CD8-positive, alpha-beta T cell (primary cell): ENCODE measurements at regions of chr1 and their contacts with region 1.

Region 1: DNA sequence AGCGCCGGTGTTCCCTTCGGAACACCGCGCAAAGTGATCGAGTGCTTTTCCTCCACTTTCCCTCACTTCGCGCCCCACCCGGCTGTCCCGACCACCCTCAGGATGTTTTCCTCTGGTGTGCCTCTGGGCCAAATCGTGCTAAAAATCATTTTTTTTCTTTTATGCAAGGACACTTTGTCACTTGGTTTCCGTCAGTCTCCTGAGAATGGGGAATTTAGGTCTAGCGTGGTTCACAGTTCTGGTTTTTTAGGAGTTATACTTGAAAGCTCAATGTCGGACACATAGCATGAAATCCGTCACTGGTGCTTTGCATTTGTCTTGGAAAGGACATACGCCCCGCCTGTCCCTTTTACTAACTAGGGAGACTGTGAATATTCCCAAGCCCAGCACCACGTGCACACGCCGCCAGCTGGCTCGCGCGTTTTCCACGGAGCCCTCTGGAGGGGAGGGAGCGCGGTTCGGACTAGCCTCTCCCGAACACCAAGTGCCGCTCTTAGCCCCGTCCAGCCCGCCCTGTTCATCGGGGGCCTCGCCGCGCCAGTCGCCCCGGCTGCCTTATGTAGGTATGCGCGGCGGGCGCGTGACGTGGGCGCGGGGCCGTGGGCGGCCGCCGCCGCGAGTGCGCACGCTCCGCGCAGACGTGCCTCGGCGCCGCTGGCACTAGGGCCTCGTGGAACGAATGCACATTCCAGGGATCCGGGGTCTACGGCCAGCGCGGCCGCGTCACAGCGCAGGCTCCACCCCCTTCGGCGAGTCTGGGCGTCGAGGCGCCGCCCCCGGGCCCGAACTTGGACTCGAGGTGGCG is 572 bp upstream of the IRF2BP2 start:
- DNase-seq: peak; percentile 78 to 98 (median 89)
- ATAC-seq: peak; percentile 42
- H3K4me3 ChIP-seq: peak overlapping the region; percentile 78 to 86
- H3K4me3 Mint-ChIP-seq: peak overlapping the region; percentile 92
- H3K27ac ChIP-seq: peak overlapping the region; percentile 97 to 99
- H3K27ac Mint-ChIP-seq: peak overlapping the region; percentile 98
- H3K4me1 ChIP-seq: peaks cover 46% of the 10 kb centered on the region
- H3K4me1 Mint-ChIP-seq: peaks cover 49% of the 10 kb centered on the region
- H3K27me3 ChIP-seq: no peaks in the 10 kb centered on the region
- H3K27me3 Mint-ChIP-seq: no peaks in the 10 kb centered on the region
- CTCF ChIP-seq: no peak

Region 2: DNA sequence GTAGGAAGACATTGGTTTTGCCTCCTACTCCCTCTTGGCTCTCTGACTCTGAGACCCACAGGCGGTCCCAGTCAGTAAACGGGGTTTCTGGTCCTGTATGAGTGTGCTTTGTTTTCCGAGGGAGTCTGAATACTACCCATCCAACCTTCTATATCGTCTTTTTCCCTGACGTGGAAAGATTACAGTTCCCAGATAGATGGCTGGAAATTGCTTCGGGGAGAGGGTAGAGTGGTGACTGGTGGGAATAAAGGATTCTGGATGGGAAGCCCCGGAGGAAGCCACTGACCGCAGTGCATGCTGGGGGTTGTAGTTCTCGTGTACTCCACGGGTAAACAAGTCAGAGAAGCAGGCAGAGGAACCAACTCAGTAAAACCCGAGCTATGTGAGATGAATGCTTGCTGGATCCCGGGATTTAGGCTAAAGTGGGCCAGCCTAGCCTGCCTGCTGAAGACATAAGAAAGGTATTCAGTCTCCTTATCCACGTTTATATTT is 65.6 kb after region 1 on chr1:
- CTCF ChIA-PET with region 1: no interaction called
- POLR2A ChIA-PET with region 1: interaction called, 4 read pairs
- intact Hi-C with region 1: loop called (anchors 2 kb)
- DNase-seq: peak in 8 of 9 experiments; percentile 23 to 74 (median 58)
- ATAC-seq: peak; percentile 80
- H3K4me3 ChIP-seq: peak overlapping the region; percentile 35 to 60
- H3K4me3 Mint-ChIP-seq: peak overlapping the region; percentile 80
- H3K27ac ChIP-seq: no peak overlapping the region
- H3K27ac Mint-ChIP-seq: peak overlapping the region; percentile 60
- H3K4me1 ChIP-seq: peaks cover 8% of the 10 kb centered on the region
- H3K4me1 Mint-ChIP-seq: peaks cover 11% of the 10 kb centered on the region
- H3K27me3 ChIP-seq: no peaks in the 10 kb centered on the region
- H3K27me3 Mint-ChIP-seq: no peaks in the 10 kb centered on the region
- CTCF ChIP-seq: no peak

Region 3: DNA sequence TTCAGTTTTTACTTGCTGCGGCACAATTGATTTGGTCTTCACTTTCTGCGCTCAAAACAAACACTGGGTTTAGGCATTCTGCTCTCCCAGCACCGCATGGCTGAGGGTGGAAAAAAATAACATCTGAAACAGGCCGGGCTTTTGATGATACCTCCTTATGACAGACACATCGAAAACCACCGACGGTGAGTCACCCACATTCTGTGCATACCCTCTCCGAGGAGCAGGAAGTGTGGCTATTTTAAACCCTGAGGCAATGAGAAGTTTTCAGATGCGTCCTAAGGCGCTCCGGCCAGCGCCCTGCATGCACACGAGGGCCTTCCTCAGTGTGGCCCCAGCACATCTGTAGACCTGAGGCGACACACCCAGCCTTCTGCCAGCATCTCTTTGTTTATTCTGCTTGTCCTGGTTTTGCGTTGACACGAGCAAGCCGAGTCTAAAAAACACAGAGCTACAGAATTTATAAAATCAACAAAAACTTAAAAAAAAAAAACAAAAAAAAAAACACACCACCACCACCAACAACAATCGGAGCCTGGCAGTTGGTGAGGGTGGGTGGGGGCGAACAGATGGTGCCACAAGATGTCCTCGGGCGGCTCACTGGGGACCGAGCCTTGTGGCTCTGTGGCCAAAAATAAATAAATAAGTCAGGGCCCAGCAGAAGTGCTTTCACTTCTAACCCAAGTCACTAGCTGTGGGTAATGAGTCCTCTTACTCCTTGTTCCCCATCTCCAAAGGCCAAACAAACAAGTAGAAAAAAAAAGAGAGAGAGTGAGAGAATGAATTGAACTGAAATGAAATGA is 162.0 kb after region 1 on chr1:
- CTCF ChIA-PET with region 1: interaction called, 5 read pairs
- POLR2A ChIA-PET with region 1: interaction called, 10 read pairs
- intact Hi-C with region 1: loop called (anchors 1 to 5 kb)
- DNase-seq: peak; percentile 59 to 95 (median 85)
- ATAC-seq: peak; percentile 80
- H3K4me3 ChIP-seq: peak overlapping the region in 1 of 2 experiments; percentile 23
- H3K4me3 Mint-ChIP-seq: peak overlapping the region; percentile 66
- H3K27ac ChIP-seq: peak overlapping the region; percentile 39 to 73
- H3K27ac Mint-ChIP-seq: peak overlapping the region; percentile 94
- H3K4me1 ChIP-seq: peaks cover 58% of the 10 kb centered on the region
- H3K4me1 Mint-ChIP-seq: peaks cover 54% of the 10 kb centered on the region
- H3K27me3 ChIP-seq: no peaks in the 10 kb centered on the region
- H3K27me3 Mint-ChIP-seq: no peaks in the 10 kb centered on the region
- CTCF ChIP-seq: no peak

Region 4: DNA sequence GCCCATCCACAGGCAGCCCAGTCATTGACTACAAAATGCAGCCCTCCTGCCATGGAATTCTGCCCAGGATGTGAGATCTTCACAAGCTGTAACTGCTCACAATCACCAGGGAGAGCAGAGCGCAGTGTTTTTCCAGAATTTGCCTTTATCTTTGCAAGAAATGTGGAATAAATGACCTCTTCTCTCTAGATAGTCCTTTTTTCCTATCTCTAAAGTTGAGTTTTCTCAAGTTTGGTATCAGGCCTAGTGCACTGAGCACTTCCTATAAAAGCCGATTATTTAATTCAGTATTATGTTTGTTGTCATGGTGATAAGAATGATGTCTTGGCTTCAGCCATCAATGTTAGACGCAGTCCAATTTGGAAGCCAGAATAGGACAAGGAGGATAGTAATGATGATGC is 246.3 kb after region 1 on chr1:
- CTCF ChIA-PET with region 1: no interaction called
- POLR2A ChIA-PET with region 1: no interaction called
- intact Hi-C with region 1: no loop called
- DNase-seq: no peak
- ATAC-seq: no peak
- H3K4me3 ChIP-seq: no peak overlapping the region
- H3K4me3 Mint-ChIP-seq: no peak overlapping the region
- H3K27ac ChIP-seq: no peak overlapping the region
- H3K27ac Mint-ChIP-seq: no peak overlapping the region
- H3K4me1 ChIP-seq: no peaks in the 10 kb centered on the region
- H3K4me1 Mint-ChIP-seq: peaks cover 2% of the 10 kb centered on the region
- H3K27me3 ChIP-seq: no peaks in the 10 kb centered on the region
- H3K27me3 Mint-ChIP-seq: no peaks in the 10 kb centered on the region
- CTCF ChIP-seq: no peak

Region 5: GRCh38 chr1:234963180-234963903 is 352.8 kb after region 1 on chr1:
- CTCF ChIA-PET with region 1: no interaction called
- POLR2A ChIA-PET with region 1: interaction called, 11 read pairs
- intact Hi-C with region 1: loop called (anchors 1 to 5 kb)
- DNase-seq: peak; percentile 58 to 97 (median 86)
- ATAC-seq: peak; percentile 85
- H3K4me3 ChIP-seq: peak overlapping the region in 1 of 2 experiments; percentile 16
- H3K4me3 Mint-ChIP-seq: peak overlapping the region; percentile 64
- H3K27ac ChIP-seq: peak overlapping the region; percentile 31 to 81
- H3K27ac Mint-ChIP-seq: peak overlapping the region; percentile 90
- H3K4me1 ChIP-seq: peaks cover 58% of the 10 kb centered on the region
- H3K4me1 Mint-ChIP-seq: peaks cover 62% of the 10 kb centered on the region
- H3K27me3 ChIP-seq: no peaks in the 10 kb centered on the region
- H3K27me3 Mint-ChIP-seq: no peaks in the 10 kb centered on the region
- CTCF ChIP-seq: no peak

Region 6: GRCh38 chr1:235160957-235161684 is 550.6 kb after region 1 on chr1 and contains the start of gene RBM34:
- CTCF ChIA-PET with region 1: no interaction called
- POLR2A ChIA-PET with region 1: interaction called, 10 read pairs
- intact Hi-C with region 1: no loop called
- DNase-seq: peak; percentile 83 to 96 (median 93)
- ATAC-seq: peak; percentile 87
- H3K4me3 ChIP-seq: peak within 1 kb of the TSS; percentile 89 to 91
- H3K4me3 Mint-ChIP-seq: peak within 1 kb of the TSS; percentile 99
- H3K27ac ChIP-seq: peak within 1 kb of the TSS; percentile 91 to 93
- H3K27ac Mint-ChIP-seq: peak within 1 kb of the TSS; percentile 100
- H3K4me1 ChIP-seq: peaks cover 40% of the 10 kb centered on the region
- H3K4me1 Mint-ChIP-seq: peaks cover 18% of the 10 kb centered on the region
- H3K27me3 ChIP-seq: no peaks in the 10 kb centered on the region
- H3K27me3 Mint-ChIP-seq: no peaks in the 10 kb centered on the region
- CTCF ChIP-seq: no peak
- total RNA-seq, gene RBM34: 243 to 267 TPM

Region 7: DNA sequence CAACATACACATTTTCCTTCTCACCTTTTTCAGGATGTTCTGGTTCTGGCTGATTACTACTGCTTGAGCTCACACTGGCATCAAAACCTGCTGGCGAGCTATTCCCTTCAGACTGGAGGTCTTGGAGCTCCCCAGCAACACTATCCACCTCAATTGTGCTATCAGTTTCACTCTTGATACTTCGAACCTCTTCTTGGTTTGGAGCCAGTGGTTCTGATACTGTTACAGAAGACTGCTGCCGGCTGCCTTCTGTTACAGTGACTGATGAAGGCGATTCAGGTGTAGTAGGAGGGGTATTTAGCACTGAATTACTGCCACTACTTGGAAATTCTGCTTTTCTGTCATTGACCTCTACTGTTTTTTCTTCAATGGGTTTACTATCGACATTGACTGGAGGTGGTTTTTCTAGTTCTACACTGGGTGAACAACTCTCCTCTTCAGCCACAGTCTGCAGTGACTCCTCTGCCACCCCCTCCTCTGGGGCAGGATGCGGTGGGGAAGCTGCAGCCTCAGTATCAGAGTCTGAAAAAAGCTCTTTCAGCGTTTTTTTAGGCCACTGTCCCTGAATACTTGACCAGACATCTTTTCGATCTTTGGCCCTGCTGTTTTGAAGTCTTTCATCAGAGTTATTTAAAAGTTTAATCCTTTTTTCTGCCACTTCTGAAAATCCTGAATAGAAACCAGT is 571.2 kb after region 1 on chr1:
- CTCF ChIA-PET with region 1: no interaction called
- POLR2A ChIA-PET with region 1: no interaction called
- intact Hi-C with region 1: no loop called
- DNase-seq: no peak
- ATAC-seq: no peak
- H3K4me3 ChIP-seq: no peak overlapping the region
- H3K4me3 Mint-ChIP-seq: no peak overlapping the region
- H3K27ac ChIP-seq: no peak overlapping the region
- H3K27ac Mint-ChIP-seq: peak overlapping the region; percentile 42
- H3K4me1 ChIP-seq: no peaks in the 10 kb centered on the region
- H3K4me1 Mint-ChIP-seq: peaks cover 20% of the 10 kb centered on the region
- H3K27me3 ChIP-seq: no peaks in the 10 kb centered on the region
- H3K27me3 Mint-ChIP-seq: no peaks in the 10 kb centered on the region
- CTCF ChIP-seq: no peak